ENCODE measurements at regions of chr17 and their contacts with region 1.

Region 1: DNA sequence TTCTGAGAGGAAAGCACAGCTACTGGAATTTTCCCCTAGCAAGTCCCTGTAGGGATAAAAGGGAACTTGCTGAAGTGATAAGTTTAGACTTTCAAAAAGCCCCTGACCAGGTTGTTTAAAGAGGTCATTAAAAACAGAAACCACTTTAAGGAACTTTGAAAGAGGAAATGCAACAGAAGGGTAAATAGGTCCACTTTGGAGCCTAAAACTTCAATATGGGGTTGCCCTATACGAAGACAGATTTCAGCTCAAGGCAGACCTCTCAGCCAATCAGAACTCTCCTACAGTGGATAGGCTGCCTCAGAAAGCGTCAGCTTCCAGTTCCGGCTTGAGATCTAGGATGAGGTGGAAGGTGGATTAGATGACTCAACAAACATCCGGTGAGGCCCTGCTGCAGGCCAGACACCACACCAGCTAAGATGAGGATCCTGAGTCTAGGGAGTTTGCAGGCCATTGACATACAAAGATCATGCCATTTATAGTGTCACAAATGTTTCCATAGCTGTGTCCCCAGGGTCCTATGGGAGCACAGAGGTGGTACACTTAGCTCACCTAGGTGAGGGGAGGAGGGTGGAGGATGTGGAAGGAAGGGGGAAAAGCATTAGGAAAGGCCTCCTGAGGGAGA is 7.9 kb upstream of the MFSD6L start:
- DNase-seq: peak; percentile 95 to 99 (median 98)
- H3K4me3 ChIP-seq: peak overlapping the region in 1 of 3 experiments; percentile 38
- H3K4me3 Mint-ChIP-seq: peak overlapping the region; percentile 58 to 68
- H3K27ac ChIP-seq: peak overlapping the region; percentile 83 to 92
- H3K27ac Mint-ChIP-seq: peak overlapping the region; percentile 95 to 99 (median 98)
- H3K4me1 ChIP-seq: peaks cover 22 to 24% of the 10 kb centered on the region in 2 donors
- H3K4me1 Mint-ChIP-seq: peaks cover 24% of the 10 kb centered on the region
- H3K27me3 ChIP-seq: no peaks in the 10 kb centered on the region
- H3K27me3 Mint-ChIP-seq: peaks cover 0 to 4% (median 0%) of the 10 kb centered on the region in 3 donors
- CTCF ChIP-seq: no peak

Region 2: DNA sequence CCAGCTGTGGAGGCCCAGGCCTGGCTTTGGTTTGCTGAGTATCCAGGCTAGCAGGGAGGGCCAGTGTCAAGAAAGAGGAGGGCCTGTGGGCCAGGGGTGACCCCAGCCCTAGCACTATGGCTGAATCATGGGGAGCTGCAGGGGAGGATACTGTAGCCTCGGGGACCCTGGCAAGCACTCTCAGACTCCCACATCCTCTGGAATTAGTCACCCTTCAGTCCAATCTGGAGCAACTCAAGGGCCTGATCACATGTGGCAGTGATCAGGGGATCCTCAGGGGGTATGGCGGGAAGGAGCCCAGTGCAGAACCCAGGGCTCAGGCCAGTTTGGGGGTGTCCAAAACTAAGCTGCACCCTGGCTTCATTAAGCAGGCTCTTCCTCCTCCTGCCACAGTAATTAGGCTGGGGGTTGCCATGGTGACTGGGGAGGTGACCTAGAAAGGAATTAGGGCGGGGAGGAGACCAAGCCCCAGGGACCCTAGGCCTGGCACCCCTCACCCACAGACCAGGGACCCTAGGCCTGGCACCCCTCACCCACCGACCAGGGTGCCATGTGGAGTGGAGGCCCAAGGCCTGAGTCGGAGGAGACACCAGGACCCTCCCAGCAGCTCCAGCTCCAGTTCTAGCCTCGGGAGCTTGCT is 1393.6 kb before region 1 on chr17:
- intact Hi-C with region 1: no loop called
- DNase-seq: no peak
- H3K4me3 ChIP-seq: no peak overlapping the region
- H3K4me3 Mint-ChIP-seq: no peak overlapping the region
- H3K27ac ChIP-seq: no peak overlapping the region
- H3K27ac Mint-ChIP-seq: peak overlapping the region in 1 of 7 donors; percentile 1
- H3K4me1 ChIP-seq: no peaks in the 10 kb centered on the region
- H3K4me1 Mint-ChIP-seq: no peaks in the 10 kb centered on the region
- H3K27me3 ChIP-seq: peaks cover 0 to 10% of the 10 kb centered on the region in 2 donors
- H3K27me3 Mint-ChIP-seq: peaks cover 16 to 31% (median 16%) of the 10 kb centered on the region in 3 donors
- CTCF ChIP-seq: no peak

Region 3: GRCh38 chr17:8791910-8792270 is 15.1 kb before region 1 on chr17:
- intact Hi-C with region 1: loop called in 1 of 2 experiments (anchors 2 kb)
- DNase-seq: peak; percentile 81 to 93 (median 86)
- H3K4me3 ChIP-seq: no peak overlapping the region
- H3K4me3 Mint-ChIP-seq: no peak overlapping the region
- H3K27ac ChIP-seq: peak overlapping the region; percentile 27 to 76
- H3K27ac Mint-ChIP-seq: peak overlapping the region; percentile 66 to 95 (median 86)
- H3K4me1 ChIP-seq: peaks cover 41 to 56% of the 10 kb centered on the region in 2 donors
- H3K4me1 Mint-ChIP-seq: peaks cover 48% of the 10 kb centered on the region
- H3K27me3 ChIP-seq: no peaks in the 10 kb centered on the region
- H3K27me3 Mint-ChIP-seq: peaks cover 0 to 4% (median 0%) of the 10 kb centered on the region in 3 donors
- CTCF ChIP-seq: no peak

Measured in CD14-positive monocyte (primary cell).